Tibial artery (tissue), 4 donors: ENCODE measurements at regions of chr9 and their contacts with region 1.

Region 1: DNA sequence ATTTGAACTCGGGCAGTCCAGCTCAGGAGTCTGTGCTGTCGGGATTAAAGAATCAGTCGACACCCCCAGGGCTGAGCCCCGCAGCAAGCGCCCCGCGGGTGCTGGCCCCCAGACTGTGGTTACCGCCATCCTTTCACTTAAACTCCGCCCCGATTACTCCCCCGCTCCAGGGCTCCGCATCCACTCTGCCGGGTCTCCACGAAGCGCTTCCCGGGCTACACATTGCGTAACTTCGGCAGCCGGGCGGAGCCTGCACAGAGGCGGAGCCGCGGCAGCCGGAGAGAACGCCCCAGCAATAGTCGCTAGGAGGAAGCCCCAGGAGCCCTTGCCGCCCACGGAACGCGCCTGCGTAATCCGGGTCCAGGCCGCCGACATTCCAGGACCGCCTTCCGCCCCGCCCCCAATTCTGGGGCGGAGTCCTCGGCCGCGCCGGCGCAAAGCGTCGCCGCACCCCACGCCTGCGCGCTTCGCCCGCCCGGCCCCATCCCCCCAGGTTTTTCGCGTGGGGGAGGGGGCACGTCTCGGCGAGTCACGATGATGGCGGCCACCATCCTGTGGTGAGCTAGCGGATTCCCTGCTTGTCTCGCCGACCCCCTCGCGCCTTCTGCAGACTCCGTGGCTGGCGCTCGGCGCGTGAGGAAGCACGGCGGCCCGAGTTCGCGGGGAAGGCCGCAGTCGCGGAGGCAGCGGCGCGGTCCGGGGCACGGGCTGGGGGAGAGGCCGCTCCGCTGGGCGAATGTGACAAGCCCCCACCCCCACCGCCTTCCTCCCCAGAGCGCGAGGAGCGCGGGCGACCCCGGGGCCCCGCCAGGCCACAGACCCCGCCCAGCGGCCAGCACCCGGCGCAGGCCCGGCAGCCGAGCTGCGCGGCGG is at the start of gene RAD23B:
- DNase-seq: peak; percentile 97 to 99
- H3K4me3 ChIP-seq: peak within 1 kb of the TSS; percentile 74 to 93
- H3K27ac ChIP-seq: peak within 1 kb of the TSS; percentile 97 to 98
- H3K4me1 ChIP-seq: peaks cover 0 to 44% (median 17%) of the 10 kb centered on the region in 4 donors
- H3K27me3 ChIP-seq: no peaks in the 10 kb centered on the region
- CTCF ChIP-seq: no peak

Region 2: DNA sequence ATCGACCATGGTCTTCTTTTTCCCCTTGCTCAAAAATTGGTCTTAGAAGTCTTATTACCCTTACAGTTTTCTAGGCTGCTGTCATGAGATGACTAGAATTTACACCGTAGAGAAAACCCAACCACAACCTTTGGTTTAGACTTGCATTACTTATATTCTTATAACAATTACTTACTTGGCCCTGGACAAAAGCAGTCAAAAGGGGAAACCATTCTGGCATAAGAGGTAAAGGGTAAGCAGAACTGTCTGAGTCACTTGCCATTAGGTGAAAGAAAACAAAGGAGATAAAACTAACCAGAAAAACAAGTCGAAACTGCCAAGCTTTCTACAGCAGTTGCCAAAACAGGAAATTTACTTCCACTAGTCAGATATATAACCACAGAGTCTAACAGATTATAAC is 1818.8 kb after region 1 on chr9:
- intact Hi-C with region 1: loop called (anchors 10 kb)
- DNase-seq: no peak
- H3K4me3 ChIP-seq: no peak overlapping the region
- H3K27ac ChIP-seq: no peak overlapping the region
- H3K4me1 ChIP-seq: peaks cover 0 to 60% (median 31%) of the 10 kb centered on the region in 4 donors
- H3K27me3 ChIP-seq: no peaks in the 10 kb centered on the region
- CTCF ChIP-seq: no peak